ENCODE measurements at regions of chr17 and their contacts with region 1.

Region 1: DNA sequence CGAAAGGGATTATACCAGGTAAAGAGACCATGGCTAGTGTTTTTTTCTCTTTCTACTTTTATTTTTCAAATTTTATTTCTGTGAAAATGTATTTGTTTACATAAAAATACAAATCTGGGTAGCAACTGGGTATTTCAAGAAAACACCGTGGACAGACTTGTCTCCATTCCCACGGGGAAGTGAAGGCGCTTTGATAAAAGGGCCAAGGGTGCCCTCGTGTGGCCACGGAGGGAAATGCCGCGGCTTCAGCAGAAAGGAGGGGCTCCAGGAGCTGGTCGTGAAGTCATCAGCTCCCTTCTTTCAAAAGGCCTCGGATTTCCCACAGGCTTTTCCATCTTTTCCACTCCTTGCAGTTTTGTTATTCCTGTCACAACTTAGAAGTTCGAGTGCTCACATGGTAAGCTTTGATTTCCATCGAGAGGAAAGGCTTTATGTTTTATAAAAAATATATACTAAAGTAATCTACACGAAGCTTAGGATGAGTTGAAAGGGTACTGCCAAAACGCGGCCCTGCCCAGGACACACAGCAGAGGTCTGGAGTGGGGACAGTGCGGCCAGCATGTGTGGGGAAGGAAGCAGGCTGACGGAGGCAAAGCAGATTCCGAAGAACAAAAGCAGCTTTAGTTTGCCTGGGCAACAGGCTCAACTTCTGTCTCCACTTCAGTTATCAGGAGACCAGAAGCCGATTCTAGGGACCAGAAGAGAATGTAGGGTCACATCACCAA is 15.3 kb upstream of the MNT start:
- DNase-seq: peak; percentile 84
- ATAC-seq: peak; percentile 83
- H3K4me3 Mint-ChIP-seq: no peak overlapping the region
- H3K27ac Mint-ChIP-seq: no peak overlapping the region
- H3K4me1 Mint-ChIP-seq: no peaks in the 10 kb centered on the region
- H3K27me3 Mint-ChIP-seq: no peaks in the 10 kb centered on the region
- CTCF ChIP-seq: peak; percentile 47

Region 2: DNA sequence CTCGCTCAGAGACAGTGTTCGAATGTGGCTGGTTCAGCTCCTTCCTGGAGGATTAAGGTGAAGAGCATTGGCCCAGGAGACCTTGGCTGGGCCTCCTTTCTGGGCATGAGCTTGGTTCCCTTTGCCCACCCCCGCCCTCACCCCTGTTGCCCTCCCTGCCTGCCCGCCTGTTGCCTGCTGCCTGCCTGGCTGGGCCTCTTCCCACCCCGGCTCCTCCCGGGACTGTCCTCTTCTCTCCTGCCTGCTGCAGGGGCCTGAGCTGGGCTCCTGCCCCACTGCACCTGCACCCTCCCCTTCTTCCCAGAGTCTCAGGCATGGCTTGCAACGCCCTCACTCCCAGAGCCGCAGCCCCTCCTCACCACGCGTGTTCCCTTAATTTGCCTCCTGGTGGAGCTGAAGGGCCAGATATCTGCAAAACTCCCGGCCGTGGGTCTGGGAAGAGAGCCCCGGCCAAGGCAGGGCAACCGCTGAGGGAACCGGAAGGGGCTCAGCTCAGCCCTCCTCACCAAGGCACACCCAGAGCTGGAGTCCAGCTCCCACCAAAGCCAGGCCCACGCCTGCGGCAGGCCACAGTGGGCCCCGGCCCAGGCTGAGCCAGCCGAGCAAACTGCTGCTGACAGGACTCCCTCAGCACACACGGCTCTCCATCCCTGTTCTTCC is 46.5 kb before region 1 on chr17:
- CTCF ChIA-PET with region 1: interaction called, 12 read pairs
- POLR2A ChIA-PET with region 1: no interaction called
- intact Hi-C with region 1: no loop called
- DNase-seq: no peak
- ATAC-seq: no peak
- H3K4me3 Mint-ChIP-seq: no peak overlapping the region
- H3K27ac Mint-ChIP-seq: no peak overlapping the region
- H3K4me1 Mint-ChIP-seq: no peaks in the 10 kb centered on the region
- H3K27me3 Mint-ChIP-seq: no peaks in the 10 kb centered on the region
- CTCF ChIP-seq: no peak

Region 3: DNA sequence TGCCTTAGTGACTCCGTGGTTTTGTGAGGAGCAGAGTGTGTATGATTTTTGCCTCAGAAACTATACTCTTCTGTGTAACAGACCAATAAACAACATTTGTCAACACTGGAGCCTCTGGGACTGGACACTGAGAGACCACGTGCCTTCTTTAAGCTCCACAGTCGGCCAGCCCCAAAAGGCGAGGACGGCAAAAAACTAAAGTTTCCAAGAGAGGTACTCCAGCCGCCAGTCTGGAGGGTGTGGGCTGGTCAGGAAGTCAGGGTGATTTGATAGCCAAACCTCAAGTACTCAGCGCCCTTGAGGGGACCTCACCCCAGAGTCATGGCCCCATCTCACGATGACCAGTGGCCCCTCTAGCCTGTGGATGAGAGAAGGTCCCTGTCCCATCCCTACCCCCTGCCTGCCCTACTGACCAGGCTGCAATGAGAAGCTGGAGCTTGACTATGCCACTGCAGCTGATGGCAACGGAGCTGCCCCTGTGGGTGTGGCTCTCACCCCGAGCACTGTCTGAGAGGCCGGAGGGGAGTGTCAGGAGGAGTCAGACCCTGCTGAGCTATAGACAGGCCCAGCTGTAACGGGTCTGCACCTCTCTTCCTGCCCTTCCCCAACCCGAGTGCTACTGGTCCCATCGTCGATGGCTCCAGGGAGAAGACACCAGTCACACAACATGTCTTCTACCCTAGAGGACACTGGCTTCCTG is 35.1 kb before region 1 on chr17:
- CTCF ChIA-PET with region 1: interaction called, 520 read pairs
- POLR2A ChIA-PET with region 1: interaction called, 29 read pairs
- intact Hi-C with region 1: loop called (anchors 1 kb)
- DNase-seq: no peak
- ATAC-seq: no peak
- H3K4me3 Mint-ChIP-seq: no peak overlapping the region
- H3K27ac Mint-ChIP-seq: no peak overlapping the region
- H3K4me1 Mint-ChIP-seq: no peaks in the 10 kb centered on the region
- H3K27me3 Mint-ChIP-seq: no peaks in the 10 kb centered on the region
- CTCF ChIP-seq: no peak

Region 4: DNA sequence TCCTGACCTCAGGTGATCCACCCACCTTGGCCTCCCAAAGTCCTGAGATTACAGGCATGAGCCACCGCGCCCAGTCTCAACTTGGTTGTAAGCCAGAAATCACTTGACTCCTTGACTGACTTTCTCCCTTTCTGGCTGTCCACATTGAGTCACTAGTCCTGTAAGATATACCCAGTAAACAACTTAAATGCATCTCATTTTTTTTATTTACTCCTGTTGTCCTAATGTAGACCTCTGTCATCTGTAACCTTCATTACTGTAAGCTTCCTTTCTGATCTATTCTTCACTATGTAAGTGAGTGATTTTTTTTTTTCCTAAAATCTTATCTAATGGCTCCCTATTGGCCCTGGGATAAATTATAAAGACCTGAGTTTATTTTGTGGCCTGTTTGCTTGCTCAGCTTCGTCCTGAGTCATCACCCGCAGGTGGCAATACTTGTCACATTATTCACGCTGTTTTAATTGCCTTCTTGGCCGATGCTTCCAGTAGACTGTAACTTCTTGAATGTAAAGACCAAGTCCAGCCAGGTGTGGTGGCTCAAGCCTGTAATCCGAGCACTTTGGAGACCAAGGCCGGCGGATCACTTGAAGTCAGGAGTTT is 218.3 kb after region 1 on chr17:
- CTCF ChIA-PET with region 1: no interaction called
- POLR2A ChIA-PET with region 1: no interaction called
- intact Hi-C with region 1: no loop called
- DNase-seq: no peak
- ATAC-seq: no peak
- H3K4me3 Mint-ChIP-seq: no peak overlapping the region
- H3K27ac Mint-ChIP-seq: no peak overlapping the region
- H3K4me1 Mint-ChIP-seq: peaks cover 66% of the 10 kb centered on the region
- H3K27me3 Mint-ChIP-seq: no peaks in the 10 kb centered on the region
- CTCF ChIP-seq: no peak

Measured in activated B cell treated with CpG ODN at 0.5 μM for 24 hours (primary cell).